ENCODE measurements at regions of chr3 and their contacts with region 1.

Region 1: DNA sequence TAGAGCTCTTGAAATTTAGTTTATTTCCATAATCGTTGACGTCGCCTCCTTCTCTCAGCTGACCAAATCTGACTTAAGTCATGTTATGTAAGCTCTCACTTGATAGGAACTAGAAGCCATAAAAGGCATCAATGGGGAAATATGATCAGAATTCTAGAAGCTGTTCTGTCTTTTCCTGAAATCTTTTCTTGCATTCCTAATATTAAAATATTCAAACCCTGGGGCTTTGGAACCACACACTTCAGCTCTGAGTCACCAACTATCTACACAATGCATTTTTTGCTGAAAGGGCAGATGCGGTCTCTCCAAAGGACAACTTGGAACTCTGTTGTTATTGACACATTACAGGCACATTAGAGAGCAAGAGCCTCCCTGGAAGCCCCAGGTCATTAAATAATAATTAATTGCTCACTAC is 91.3 kb downstream of the LARS2 start:
- DNase-seq: no peak
- H3K4me3 ChIP-seq: no peak overlapping the region
- H3K27ac ChIP-seq: no peak overlapping the region
- H3K4me1 ChIP-seq: no peaks in the 10 kb centered on the region
- H3K27me3 ChIP-seq: no peaks in the 10 kb centered on the region
- CTCF ChIP-seq: no peak
- POLR2A ChIP-seq: no peak

Region 2: DNA sequence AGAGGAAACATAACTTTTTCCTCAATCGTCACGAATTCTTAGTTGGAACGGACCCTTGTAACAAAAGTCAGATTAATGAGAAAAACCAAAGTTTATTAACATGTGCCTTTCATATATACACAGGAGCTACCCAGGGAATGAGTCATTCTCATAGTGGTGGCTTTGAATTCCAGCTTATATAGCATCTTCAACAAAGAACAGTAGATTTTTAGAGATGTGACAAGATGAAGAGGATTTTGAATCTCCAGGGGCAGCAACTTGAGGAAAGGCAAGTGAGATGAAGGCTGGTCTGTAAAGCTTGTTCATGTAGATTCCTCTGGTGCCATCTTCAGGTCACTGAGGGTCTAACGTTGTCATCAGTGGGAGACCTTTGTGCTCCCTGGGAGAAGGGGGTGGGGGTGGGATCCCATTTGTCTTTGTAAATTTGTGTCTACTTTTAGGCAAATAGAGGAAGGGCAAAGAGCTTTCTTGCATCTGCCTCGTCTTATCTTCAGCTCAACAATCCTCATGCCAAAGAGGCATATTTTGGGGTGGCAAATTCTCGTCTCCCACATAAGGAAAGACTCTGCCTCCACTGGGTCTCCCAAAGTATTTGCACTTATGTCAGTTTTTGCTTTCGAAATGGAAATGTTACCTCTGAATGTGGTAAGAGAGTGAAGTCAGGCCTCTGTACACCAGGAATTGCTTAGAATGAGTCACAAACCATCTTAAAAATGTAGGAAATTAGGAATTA is 424.1 kb before region 1 on chr3:
- intact Hi-C with region 1: loop called (anchors 10 kb)
- DNase-seq: no peak
- H3K4me3 ChIP-seq: no peak overlapping the region
- H3K27ac ChIP-seq: peak overlapping the region in 6 of 8 donors; percentile 3 to 65 (median 45)
- H3K4me1 ChIP-seq: peaks cover 0 to 43% (median 14%) of the 10 kb centered on the region in 6 donors
- H3K27me3 ChIP-seq: no peaks in the 10 kb centered on the region
- CTCF ChIP-seq: peak in 1 of 11 experiments; percentile 7
- POLR2A ChIP-seq: no peak

Measured in spleen (tissue), 13 donors.